ENCODE measurements at regions of chr10 and their contacts with region 1.

Region 1: GRCh38 chr10:5764422-5765297 is 48.6 kb downstream of the GDI2 start:
- DNase-seq: no peak
- H3K4me3 ChIP-seq: no peak overlapping the region
- H3K4me3 Mint-ChIP-seq: no peak overlapping the region
- H3K27ac ChIP-seq: no peak overlapping the region
- H3K27ac Mint-ChIP-seq: peak overlapping the region; percentile 5 to 81 (median 63)
- H3K4me1 ChIP-seq: no peaks in the 10 kb centered on the region
- H3K4me1 Mint-ChIP-seq: peaks cover 0 to 13% (median 5%) of the 10 kb centered on the region in 4 donors
- H3K27me3 ChIP-seq: no peaks in the 10 kb centered on the region
- H3K27me3 Mint-ChIP-seq: no peaks in the 10 kb centered on the region

Region 2: GRCh38 chr10:5117026-5117425 is 647.6 kb before region 1 on chr10:
- CTCF ChIA-PET with region 1: no interaction called
- POLR2A ChIA-PET with region 1: no interaction called
- intact Hi-C with region 1: no loop called
- DNase-seq: no peak
- H3K4me3 ChIP-seq: no peak overlapping the region
- H3K4me3 Mint-ChIP-seq: no peak overlapping the region
- H3K27ac ChIP-seq: no peak overlapping the region
- H3K27ac Mint-ChIP-seq: no peak overlapping the region
- H3K4me1 ChIP-seq: no peaks in the 10 kb centered on the region
- H3K4me1 Mint-ChIP-seq: no peaks in the 10 kb centered on the region
- H3K27me3 ChIP-seq: no peaks in the 10 kb centered on the region
- H3K27me3 Mint-ChIP-seq: peaks cover 0 to 3% of the 10 kb centered on the region in 2 donors

Region 3: DNA sequence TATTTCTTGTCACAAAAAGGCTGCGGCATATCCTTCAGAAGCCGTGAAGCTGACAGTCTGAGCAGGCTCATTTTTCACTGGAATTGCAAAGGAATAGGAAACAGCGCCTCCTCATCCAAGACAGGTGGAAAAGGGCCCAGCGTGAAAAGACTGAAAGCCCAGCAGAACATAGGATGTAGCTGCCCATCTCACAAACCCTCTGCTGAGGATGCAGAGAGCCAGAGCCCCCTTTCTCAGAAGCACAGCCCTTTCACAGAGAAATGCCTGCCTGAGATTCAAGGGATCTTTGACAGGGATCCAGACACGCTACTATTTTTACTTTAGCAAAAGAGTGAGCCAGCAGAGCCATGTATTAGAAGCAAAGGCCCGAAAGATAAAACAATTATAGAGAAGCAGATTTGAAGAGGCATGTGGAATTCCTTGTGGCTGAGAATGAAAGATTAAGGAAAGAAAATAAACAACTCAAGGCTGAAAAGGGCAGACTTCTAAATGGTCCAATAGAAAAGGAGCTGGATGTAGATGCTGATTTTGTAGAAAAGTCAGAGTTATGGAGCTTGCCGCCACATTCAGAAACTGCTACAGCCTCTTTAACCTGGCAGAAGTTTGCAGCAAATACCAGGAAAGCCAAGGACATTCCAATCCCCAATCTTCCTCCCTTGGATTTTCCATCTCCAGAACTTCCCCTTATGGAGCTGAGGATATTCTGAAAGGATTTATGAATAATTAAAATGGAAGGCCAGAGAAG is 11.6 kb after region 1 on chr10:
- CTCF ChIA-PET with region 1: no interaction called
- POLR2A ChIA-PET with region 1: interaction called, 13 read pairs
- intact Hi-C with region 1: no loop called
- DNase-seq: no peak
- H3K4me3 ChIP-seq: peak overlapping the region in 1 of 2 donors; percentile 23
- H3K4me3 Mint-ChIP-seq: peak overlapping the region; percentile 56 to 81 (median 76)
- H3K27ac ChIP-seq: peak overlapping the region; percentile 58
- H3K27ac Mint-ChIP-seq: peak overlapping the region; percentile 88 to 97 (median 94)
- H3K4me1 ChIP-seq: peaks cover 26% of the 10 kb centered on the region
- H3K4me1 Mint-ChIP-seq: peaks cover 35 to 65% (median 46%) of the 10 kb centered on the region in 4 donors
- H3K27me3 ChIP-seq: no peaks in the 10 kb centered on the region
- H3K27me3 Mint-ChIP-seq: no peaks in the 10 kb centered on the region

Measured in CD4-positive, alpha-beta memory T cell (primary cell).